ENCODE measurements at regions of chr4 and their contacts with region 1.

Region 1: DNA sequence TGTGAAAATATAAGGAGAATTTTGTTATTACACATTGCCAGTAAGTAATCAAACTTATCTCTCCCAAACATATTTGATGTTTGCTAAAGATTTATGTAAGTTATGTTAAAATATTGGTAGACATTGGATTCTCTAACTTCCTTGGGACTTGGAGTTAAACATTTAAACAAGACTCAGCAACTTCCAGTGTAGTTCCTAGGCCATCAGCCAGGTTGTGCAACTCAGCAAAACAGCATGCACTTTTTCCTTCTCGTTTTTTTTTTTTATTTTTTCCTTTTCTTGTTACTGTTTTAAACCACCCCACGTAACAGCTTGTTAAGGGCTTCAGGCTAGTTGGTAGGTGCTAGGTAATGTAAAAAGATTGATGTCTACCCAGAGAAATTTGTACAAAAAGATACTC is 510.4 kb downstream of the ANKRD50 start:
- DNase-seq: peak in 1 of 2 donors; percentile 75
- H3K4me3 ChIP-seq: no peak overlapping the region
- H3K27ac ChIP-seq: peak overlapping the region; percentile 5 to 21
- H3K4me1 ChIP-seq: peaks cover 0 to 26% of the 10 kb centered on the region in 2 donors
- H3K27me3 ChIP-seq: no peaks in the 10 kb centered on the region
- CTCF ChIP-seq: peak in 2 of 3 experiments; percentile 15 to 45

Region 2: DNA sequence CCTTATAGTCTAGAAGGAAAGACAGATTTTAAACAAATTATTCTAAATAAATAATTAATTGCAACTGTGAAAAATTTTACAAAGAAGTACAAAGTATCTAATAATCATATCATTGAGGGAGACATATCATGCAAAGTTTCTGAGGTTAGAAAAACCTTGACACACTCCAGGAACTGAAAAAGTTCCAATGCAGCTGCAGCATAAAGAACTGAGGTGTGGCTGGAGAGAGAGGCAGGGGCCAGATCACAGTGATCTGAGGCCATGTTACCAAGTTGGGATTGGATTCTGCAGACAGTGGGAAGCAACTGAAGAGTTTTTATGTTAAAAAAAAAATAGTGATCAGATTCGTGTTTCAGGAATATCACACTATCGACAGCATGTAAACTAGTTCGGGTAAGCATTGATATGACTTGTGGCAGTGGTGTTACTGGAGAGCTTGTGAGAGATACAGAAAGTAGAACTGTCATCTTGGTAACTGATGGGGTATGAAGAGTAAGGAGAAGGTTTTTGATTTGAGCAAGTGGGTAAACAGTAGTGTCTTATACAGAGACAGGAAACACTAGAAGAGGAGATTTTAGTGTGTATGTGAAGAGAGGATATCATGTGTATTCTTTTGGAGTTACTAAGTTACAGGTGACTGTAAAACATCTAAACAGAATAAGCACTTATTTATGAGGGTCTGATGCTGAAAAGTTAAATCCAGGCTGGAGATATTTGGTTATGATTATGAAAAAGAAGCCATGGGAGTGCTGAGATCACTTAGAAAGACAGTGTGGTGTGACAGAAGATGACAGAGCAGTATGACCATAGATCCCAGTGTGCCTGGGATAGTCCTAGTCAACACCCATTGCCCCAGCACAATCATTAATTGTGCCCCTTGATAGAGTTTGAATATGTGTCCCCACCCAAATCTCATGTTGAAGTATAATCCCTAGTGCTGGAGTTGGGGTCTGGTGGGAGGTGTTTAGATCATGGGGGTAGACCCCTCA is 821.1 kb before region 1 on chr4:
- intact Hi-C with region 1: loop called (anchors 10 kb)
- DNase-seq: no peak
- H3K4me3 ChIP-seq: no peak overlapping the region
- H3K27ac ChIP-seq: no peak overlapping the region
- H3K4me1 ChIP-seq: peaks cover 0 to 2% of the 10 kb centered on the region in 2 donors
- H3K27me3 ChIP-seq: no peaks in the 10 kb centered on the region
- CTCF ChIP-seq: no peak

Region 3: GRCh38 chr4:123826896-123827295 is 375.2 kb before region 1 on chr4:
- intact Hi-C with region 1: loop called (anchors 10 kb)
- DNase-seq: no peak
- H3K4me3 ChIP-seq: no peak overlapping the region
- H3K27ac ChIP-seq: no peak overlapping the region
- H3K4me1 ChIP-seq: peaks cover 0 to 16% of the 10 kb centered on the region in 2 donors
- H3K27me3 ChIP-seq: no peaks in the 10 kb centered on the region
- CTCF ChIP-seq: no peak